ENCODE measurements at regions of chr20 and their contacts with region 1.

Region 1: GRCh38 chr20:3889489-3890397 is 556 bp downstream of the PANK2 start:
- DNase-seq: peak; percentile 56
- H3K4me3 Mint-ChIP-seq: peak overlapping the region; percentile 97
- H3K27ac Mint-ChIP-seq: peak overlapping the region; percentile 96
- H3K4me1 Mint-ChIP-seq: peaks cover 56% of the 10 kb centered on the region
- H3K27me3 Mint-ChIP-seq: no peaks in the 10 kb centered on the region

Region 2: DNA sequence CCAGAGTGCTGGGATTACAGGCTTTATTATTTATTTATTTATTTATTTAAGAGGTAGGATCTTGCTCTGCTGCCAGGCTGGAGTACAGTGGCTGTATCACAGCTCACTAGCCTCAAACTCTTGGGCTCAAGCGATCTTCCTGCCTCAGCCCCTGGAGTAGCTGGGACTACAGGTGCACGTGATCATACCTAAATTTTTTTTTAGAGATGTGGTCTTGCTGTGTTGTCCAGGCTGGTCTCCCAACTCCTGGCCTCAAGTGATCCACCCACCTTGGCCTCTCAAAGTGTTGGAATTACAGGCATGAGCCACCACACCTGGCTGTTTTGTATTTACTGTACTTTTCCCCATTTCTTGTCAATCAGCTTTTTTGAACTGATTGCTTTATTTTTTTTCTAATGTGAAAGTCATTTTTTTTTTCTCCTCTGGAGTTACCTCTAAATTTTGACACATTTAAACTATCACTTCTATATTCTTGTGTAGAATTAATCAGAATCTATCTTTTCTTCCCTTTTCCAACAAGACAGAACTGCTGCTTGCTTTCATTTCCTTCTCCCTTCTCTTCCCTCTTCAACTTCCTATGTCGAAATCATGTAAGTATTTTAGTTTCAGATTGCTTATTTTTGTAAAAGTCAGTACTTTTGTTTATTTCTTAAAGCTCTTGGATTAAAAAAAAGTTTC is 11.4 kb after region 1 on chr20:
- CTCF ChIA-PET with region 1: interaction called, 5 read pairs
- POLR2A ChIA-PET with region 1: interaction called, 18 read pairs
- DNase-seq: no peak
- H3K4me3 Mint-ChIP-seq: no peak overlapping the region
- H3K27ac Mint-ChIP-seq: peak overlapping the region; percentile 69
- H3K4me1 Mint-ChIP-seq: peaks cover 76% of the 10 kb centered on the region
- H3K27me3 Mint-ChIP-seq: no peaks in the 10 kb centered on the region

Region 3: GRCh38 chr20:3911956-3912355 is 22.2 kb after region 1 on chr20:
- CTCF ChIA-PET with region 1: interaction called, 3 read pairs
- POLR2A ChIA-PET with region 1: interaction called, 18 read pairs
- DNase-seq: no peak
- H3K4me3 Mint-ChIP-seq: no peak overlapping the region
- H3K27ac Mint-ChIP-seq: no peak overlapping the region
- H3K4me1 Mint-ChIP-seq: peaks cover 57% of the 10 kb centered on the region
- H3K27me3 Mint-ChIP-seq: no peaks in the 10 kb centered on the region

Region 4: DNA sequence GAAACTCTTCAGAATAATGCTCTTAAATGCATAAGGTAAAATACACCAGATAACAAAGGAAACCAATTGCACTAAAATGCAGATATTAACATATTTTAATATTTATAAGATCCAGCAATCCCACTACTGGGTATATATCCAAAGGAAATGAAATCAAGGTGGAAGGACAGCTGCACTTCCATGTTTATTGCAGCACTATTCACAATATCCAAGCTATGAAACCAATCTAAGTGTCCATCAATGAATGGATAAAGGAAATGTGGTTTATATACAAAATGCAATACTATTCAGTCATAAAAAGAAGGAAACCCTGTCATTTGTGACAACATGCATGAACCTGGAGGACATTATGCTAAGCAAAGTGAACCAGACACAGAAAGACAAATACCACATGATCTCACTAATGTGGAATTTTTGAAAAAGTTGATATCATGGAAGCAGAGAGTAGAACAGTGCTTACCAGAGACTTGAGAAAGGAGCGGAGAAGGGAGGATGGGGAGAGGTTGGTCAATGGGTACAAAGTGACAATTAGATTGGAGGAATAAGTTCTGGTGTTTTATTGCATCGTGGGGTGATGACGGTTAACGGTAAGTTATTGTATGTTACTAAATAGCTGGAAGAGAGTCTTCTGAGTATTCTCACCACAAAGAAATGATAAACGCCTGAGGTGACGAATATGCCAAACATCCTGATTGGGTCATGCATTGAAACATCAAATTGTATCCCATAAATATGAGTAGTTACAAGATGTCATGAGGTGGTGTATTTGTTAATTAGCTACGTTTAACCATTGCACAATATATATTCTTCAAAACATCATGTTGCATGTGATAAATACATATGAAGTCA is 163.6 kb after region 1 on chr20:
- CTCF ChIA-PET with region 1: no interaction called
- POLR2A ChIA-PET with region 1: no interaction called
- DNase-seq: no peak
- H3K4me3 Mint-ChIP-seq: no peak overlapping the region
- H3K27ac Mint-ChIP-seq: no peak overlapping the region
- H3K4me1 Mint-ChIP-seq: no peaks in the 10 kb centered on the region
- H3K27me3 Mint-ChIP-seq: peaks cover 9% of the 10 kb centered on the region